HepG2 (cell line): ENCODE measurements at regions of chr15 and their contacts with region 1.

Region 1: DNA sequence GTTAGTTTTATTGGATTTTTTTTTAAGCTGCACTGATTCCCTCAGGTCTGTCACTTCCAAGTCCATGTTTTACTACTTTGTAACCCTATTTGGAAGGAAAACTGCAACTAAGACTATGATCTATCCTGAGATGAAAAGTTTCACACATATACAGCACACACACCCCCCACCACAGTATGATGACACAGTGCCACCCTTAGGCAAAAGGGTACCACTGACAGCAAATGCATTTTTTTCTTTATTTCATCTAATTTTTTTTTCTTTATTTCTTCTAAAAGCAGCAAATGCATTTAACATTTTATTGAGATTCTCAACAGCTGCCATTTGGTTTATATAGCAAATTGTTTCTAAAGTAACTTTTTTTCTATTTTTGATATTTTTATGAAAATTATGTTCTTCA is 21.2 kb downstream of the NGRN start:
- DNase-seq: peak; percentile 43
- ATAC-seq: peak; percentile 74
- H3K4me3 ChIP-seq: no peak overlapping the region
- H3K27ac ChIP-seq: no peak overlapping the region
- H3K4me1 ChIP-seq: peaks cover 9% of the 10 kb centered on the region
- H3K27me3 ChIP-seq: no peaks in the 10 kb centered on the region; a peak in 1 of 5 replicates
- CTCF ChIP-seq: peak; percentile 70
- EP300 ChIP-seq: no peak
- POLR2A ChIP-seq: no peak
- RAD21 ChIP-seq: no peak

Region 2: DNA sequence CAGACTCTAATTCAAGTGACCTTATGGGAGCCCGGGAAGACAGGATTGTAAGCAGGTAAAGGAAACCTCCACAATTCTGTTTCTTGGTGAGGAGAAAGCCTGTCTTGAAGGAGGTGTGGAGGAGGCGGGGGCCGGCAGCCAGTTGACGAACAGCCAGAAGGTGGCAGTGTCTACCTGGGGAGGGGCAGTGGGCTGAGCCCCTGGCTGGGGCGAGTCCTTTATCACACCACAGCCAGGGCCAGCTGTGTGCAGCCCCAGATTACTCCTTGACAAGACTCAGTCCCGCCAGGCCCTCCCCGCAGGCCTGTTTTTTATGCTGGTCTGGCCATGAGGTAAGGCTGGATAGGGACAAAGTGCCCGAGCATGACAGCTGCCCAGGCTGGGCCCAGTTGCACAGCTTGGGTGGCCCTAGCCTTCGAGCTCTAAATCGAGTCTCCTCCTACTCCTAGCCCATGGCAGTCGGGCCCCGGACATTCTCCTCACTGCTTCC is 143.5 kb before region 1 on chr15:
- CTCF ChIA-PET with region 1: no interaction called
- POLR2A ChIA-PET with region 1: no interaction called
- in situ Hi-C with region 1: no loop called
- intact Hi-C with region 1: loop called (anchors 1 kb)
- DNase-seq: no peak
- ATAC-seq: peak; percentile 94
- H3K4me3 ChIP-seq: peak overlapping the region; percentile 19 to 70 (median 24); a peak in 4 of 6 replicates
- H3K27ac ChIP-seq: no peak overlapping the region
- H3K4me1 ChIP-seq: peaks cover 47% of the 10 kb centered on the region
- H3K27me3 ChIP-seq: peaks cover 2 to 19% of the 10 kb centered on the region in 2 experiments; a peak in 4 of 5 replicates
- CTCF ChIP-seq: peak; percentile 94
- EP300 ChIP-seq: no peak
- POLR2A ChIP-seq: no peak
- RAD21 ChIP-seq: peak; percentile 93

Region 3: DNA sequence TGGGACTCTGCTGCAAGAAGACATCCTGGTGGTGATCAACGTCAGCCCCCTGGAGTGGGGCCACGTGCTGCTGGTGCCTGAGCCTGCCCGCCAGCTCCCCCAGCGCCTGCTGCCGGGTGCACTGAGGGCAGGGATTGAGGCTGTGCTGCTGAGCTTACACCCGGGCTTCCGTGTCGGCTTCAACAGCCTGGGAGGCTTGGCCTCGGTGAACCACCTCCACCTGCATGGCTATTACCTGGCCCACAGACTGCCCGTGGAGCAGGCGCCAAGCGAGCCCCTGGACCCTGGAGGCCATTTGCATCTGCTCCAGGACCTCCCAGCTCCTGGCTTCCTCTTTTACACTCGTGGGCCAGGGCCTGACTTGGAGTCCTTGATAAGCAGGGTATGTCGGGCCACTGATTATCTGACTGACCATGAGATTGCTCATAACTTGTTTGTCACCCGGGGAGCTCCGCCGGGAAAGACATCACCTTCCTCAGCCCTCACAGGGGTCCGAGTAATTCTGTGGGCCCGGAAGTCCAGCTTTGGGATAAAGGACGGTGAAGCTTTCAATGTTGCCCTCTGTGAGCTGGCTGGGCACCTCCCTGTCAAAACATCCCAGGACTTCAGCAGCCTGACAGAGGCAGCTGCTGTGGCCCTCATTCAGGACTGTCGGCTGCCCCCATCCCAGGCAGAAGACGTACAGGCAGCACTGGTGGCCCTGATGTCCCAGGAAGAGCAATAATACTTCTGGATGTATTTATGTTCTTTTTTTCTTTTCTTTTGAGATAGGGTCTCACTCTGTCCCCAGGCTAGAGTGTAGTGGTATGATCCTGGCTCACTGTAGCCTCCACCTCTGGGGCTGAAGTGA is 45.1 kb before region 1 on chr15:
- CTCF ChIA-PET with region 1: no interaction called
- POLR2A ChIA-PET with region 1: no interaction called
- in situ Hi-C with region 1: no loop called
- intact Hi-C with region 1: no loop called
- DNase-seq: no peak
- ATAC-seq: no peak; the same call in 2 of the 3 replicates
- H3K4me3 ChIP-seq: no peak overlapping the region
- H3K27ac ChIP-seq: no peak overlapping the region
- H3K4me1 ChIP-seq: peaks cover 16% of the 10 kb centered on the region
- H3K27me3 ChIP-seq: no peaks in the 10 kb centered on the region
- CTCF ChIP-seq: no peak
- EP300 ChIP-seq: no peak
- POLR2A ChIP-seq: no peak
- RAD21 ChIP-seq: no peak